ENCODE measurements at regions of chr14 and their contacts with region 1.

Region 1: DNA sequence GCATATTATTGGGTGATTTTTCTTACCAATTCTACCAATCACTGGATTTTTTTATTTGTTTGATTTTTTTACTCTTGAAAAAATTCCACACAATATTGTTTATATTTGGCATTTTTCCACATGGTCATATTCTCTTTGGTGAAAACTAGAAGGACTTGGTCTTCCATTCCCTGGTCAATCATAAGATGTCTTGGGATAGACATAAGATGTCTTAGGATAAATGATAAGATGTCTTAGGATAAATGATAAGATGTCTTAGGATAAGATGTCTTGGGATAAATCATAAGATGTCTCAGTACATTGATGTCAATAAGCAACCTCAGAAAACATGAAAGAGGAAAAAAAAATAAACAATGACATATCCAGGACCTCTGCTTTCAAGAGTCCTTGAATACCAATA is 309.1 kb downstream of the LRFN5 start:
- DNase-seq: no peak
- ATAC-seq: no peak
- H3K4me3 ChIP-seq: no peak overlapping the region
- H3K27ac ChIP-seq: no peak overlapping the region
- H3K4me1 ChIP-seq: no peaks in the 10 kb centered on the region
- H3K27me3 ChIP-seq: no peaks in the 10 kb centered on the region
- CTCF ChIP-seq: no peak
- POLR2A ChIP-seq: no peak

Region 2: DNA sequence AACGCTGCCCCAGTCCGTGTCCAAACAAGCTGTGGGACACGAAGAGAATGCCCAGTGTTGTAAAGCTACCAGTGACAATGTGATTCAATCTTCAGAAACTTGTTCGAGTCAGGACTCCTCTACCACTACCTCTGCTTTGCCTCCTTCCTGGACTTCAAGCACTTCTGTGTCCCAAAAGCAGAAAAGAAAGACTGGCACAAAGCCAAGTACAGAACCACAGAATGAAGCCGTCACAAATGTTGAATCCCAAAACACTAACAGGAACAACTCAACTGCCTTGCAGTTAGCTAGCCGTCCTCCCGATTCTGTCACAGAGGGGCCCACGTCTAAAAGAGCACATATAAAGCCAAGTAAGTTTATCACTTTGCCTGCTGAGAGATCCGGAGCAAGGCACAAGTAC is 24.1 kb before region 1 on chr14:
- intact Hi-C with region 1: loop called in 1 of 10 experiments (anchors 2 kb)
- DNase-seq: no peak
- ATAC-seq: no peak
- H3K4me3 ChIP-seq: no peak overlapping the region
- H3K27ac ChIP-seq: no peak overlapping the region
- H3K4me1 ChIP-seq: no peaks in the 10 kb centered on the region
- H3K27me3 ChIP-seq: no peaks in the 10 kb centered on the region
- CTCF ChIP-seq: no peak
- POLR2A ChIP-seq: no peak

Measured in heart left ventricle (tissue), 16 donors.